ENCODE measurements at regions of chr15 and their contacts with region 1.

Region 1: DNA sequence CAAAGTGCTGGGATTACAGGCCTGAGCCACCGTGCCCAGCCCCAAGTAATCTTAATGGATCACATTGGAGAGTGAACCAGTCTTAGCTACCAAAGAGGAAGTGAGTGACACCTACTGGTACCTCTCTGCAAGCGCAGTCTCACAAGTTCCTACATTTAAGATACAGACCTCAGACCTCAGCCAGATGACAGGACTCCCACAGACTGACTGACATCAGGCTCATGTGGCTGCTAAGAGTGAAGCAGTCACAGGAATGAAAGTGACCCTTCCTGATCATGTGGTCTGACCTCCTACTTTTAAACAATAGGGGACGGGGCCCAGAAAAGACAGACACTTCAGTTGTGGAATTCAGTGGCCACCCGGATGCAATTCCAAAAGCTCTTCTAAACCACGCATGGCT is 36.3 kb upstream of the GNB5 start:
- DNase-seq: peak; percentile 72
- H3K4me3 ChIP-seq: no peak overlapping the region
- H3K27ac ChIP-seq: no peak overlapping the region
- H3K4me1 ChIP-seq: no peaks in the 10 kb centered on the region
- H3K27me3 ChIP-seq: no peaks in the 10 kb centered on the region
- CTCF ChIP-seq: peak; percentile 90
- EP300 ChIP-seq: no peak
- RAD21 ChIP-seq: peak; percentile 78

Region 2: GRCh38 chr15:52163321-52164190 is 63.9 kb before region 1 on chr15:
- CTCF ChIA-PET with region 1: interaction called, 15 read pairs
- POLR2A ChIA-PET with region 1: no interaction called
- DNase-seq: peak; percentile 34
- H3K4me3 ChIP-seq: no peak overlapping the region
- H3K27ac ChIP-seq: no peak overlapping the region
- H3K4me1 ChIP-seq: no peaks in the 10 kb centered on the region
- H3K27me3 ChIP-seq: no peaks in the 10 kb centered on the region
- CTCF ChIP-seq: peak; percentile 33; the same call in 1 of the 2 replicates
- EP300 ChIP-seq: no peak
- RAD21 ChIP-seq: peak; percentile 27

Region 3: DNA sequence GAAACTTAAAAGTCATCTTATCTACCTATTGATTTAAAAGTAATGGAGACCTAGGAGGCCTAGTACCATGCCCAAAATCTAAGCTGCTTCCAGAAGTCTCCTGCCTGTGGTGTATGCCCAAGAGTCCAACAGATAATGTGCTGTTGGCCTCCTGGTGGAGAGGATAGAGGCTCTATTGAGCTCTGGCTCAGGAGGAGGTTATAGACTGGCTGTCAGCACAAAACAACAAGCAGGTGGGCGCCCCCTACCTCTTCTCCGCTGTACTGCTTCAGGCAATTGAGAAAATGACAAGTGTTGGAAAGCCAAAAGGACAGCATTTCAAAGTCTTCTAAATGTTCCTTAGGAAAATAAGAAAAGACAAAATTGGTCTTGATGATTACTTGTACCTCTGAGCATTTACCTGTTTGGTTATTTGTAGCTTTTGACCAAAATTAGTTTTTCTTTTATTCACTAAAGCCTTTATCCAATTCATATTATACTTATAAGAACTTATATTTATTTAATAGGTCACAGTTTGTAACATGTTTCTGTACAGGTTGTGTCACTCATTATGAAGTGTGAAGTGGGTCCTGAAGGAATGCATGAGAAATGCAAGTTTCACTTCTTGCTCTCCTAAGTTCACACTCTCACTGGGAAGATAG is 19.0 kb before region 1 on chr15:
- CTCF ChIA-PET with region 1: interaction called, 19 read pairs
- POLR2A ChIA-PET with region 1: no interaction called
- DNase-seq: peak; percentile 63
- H3K4me3 ChIP-seq: peak overlapping the region in 1 of 2 experiments; percentile 40; a peak in 1 of 4 replicates
- H3K27ac ChIP-seq: no peak overlapping the region
- H3K4me1 ChIP-seq: peaks cover 0 to 6% of the 10 kb centered on the region in 2 experiments; a peak in 2 of 4 replicates
- H3K27me3 ChIP-seq: no peaks in the 10 kb centered on the region
- CTCF ChIP-seq: peak; percentile 86
- EP300 ChIP-seq: 0 out of 4 replicates have a peak, but pooled peaks of 1 of the 2 experiments have one; percentile 7
- RAD21 ChIP-seq: peak; percentile 72

Region 4: GRCh38 chr15:52217186-52217585 is 10.3 kb before region 1 on chr15:
- CTCF ChIA-PET with region 1: interaction called, 28 read pairs
- POLR2A ChIA-PET with region 1: no interaction called
- DNase-seq: no peak
- H3K4me3 ChIP-seq: no peak overlapping the region; a peak in 1 of 4 replicates
- H3K27ac ChIP-seq: no peak overlapping the region
- H3K4me1 ChIP-seq: no peaks in the 10 kb centered on the region
- H3K27me3 ChIP-seq: no peaks in the 10 kb centered on the region
- CTCF ChIP-seq: peak; percentile 12; the same call in 1 of the 2 replicates
- EP300 ChIP-seq: no peak
- RAD21 ChIP-seq: no peak

Region 5: DNA sequence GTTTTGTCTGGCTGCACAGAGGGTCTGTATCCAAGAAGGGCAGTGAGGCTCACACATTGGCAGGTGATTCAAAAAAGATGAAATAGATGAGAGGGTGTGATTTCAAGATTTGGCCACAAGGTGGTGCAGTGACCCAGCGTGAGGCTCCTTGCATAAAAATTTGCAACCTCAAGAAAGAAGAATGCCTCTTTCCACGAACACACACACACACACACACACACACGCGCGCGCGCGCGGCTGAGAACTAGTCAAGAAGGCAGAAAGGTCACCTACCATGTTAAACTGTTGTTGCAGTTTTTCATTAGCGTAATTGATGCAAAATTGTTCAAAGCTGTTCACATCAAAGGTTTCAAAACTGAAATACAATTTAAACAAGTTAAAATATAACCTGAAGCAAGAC is 28.9 kb after region 1 on chr15:
- CTCF ChIA-PET with region 1: interaction called, 22 read pairs
- POLR2A ChIA-PET with region 1: no interaction called
- DNase-seq: peak; percentile 76
- H3K4me3 ChIP-seq: no peak overlapping the region; a peak in 1 of 4 replicates
- H3K27ac ChIP-seq: no peak overlapping the region
- H3K4me1 ChIP-seq: peaks cover under 1 to 14% of the 10 kb centered on the region in 2 experiments; a peak in 3 of 4 replicates
- H3K27me3 ChIP-seq: no peaks in the 10 kb centered on the region
- CTCF ChIP-seq: peak; percentile 74
- EP300 ChIP-seq: no peak
- RAD21 ChIP-seq: peak; percentile 89

Measured in SK-N-SH (cell line).